CD4-positive, alpha-beta memory T cell (primary cell): ENCODE measurements at regions of chr19 and their contacts with region 1.

Region 1: DNA sequence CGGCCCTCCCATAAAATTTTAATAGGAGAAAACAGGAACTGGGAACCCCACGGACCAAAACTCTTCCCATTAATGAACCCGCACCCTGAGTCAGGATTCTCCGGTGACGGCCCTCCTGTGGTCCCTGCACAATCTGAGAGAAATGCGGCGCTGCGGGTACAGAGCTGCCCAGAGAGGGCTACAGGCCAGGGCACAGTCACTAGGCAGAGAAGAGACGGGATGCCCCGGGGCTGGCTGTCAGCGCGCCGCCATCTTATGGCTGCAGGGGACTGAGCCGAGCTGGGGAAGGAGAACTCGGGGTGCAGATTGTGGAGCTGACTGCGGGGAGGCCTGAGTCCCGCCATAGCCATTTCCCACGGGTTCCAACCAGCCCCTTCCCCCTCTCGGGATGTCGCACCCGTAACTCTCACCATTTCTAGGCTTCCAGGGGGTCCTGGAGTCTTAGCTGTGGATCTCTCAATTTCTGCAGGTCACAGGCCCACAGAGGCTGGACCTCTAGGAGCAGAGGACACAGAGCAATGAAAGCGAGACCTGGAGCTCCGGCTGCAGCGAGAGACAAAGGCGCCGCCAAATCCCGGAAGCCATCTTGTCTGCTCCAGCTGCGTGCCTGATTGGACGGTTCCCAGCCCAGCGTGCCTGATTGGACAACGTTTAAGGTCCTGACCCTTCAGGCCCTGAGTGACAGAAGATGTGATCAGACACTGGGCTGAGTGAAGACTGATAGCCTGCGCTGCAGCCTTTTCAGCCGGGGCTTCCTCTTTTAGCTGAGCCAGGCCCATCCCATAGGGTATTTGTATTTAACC is at the start of gene ZNF675:
- DNase-seq: peak; percentile 87 to 93 (median 88)
- H3K4me3 ChIP-seq: peak within 1 kb of the TSS; percentile 64 to 100
- H3K4me3 Mint-ChIP-seq: peak within 1 kb of the TSS; percentile 99 to 100 (median 99)
- H3K27ac ChIP-seq: peak within 1 kb of the TSS; percentile 83
- H3K27ac Mint-ChIP-seq: peak within 1 kb of the TSS; percentile 96 to 99 (median 98)
- H3K4me1 ChIP-seq: peaks cover 32% of the 10 kb centered on the region
- H3K4me1 Mint-ChIP-seq: peaks cover 35 to 60% (median 48%) of the 10 kb centered on the region in 4 donors
- H3K27me3 ChIP-seq: no peaks in the 10 kb centered on the region
- H3K27me3 Mint-ChIP-seq: no peaks in the 10 kb centered on the region
- total RNA-seq, gene ZNF675: 34.3 to 36.9 TPM

Region 2: DNA sequence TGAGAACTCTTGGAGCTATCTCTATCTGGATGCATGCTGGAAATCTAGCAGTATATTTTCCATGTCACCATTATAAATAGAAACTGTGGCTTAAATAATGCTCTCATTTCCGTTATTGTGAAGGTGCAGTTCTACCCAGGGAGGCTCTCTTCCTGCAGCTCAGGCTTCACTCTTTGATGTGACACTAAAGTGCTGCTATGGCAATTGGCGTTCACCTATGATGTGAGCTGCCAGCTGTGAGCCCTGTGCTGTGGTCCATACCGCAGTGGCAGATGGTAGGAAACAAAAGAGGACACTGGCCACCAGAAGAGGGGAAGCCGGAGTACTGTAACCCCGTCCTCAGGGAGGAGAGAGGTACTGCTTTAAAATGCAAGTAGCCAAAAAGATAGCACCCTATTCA is 112.5 kb after region 1 on chr19:
- CTCF ChIA-PET with region 1: interaction called, 4 read pairs
- POLR2A ChIA-PET with region 1: interaction called, 10 read pairs
- intact Hi-C with region 1: loop called (anchors 5 kb)
- DNase-seq: peak; percentile 59 to 73 (median 65)
- H3K4me3 ChIP-seq: peak overlapping the region in 1 of 2 donors; percentile 45
- H3K4me3 Mint-ChIP-seq: peak overlapping the region; percentile 82 to 94 (median 88)
- H3K27ac ChIP-seq: peak overlapping the region; percentile 51
- H3K27ac Mint-ChIP-seq: peak overlapping the region; percentile 93 to 98 (median 96)
- H3K4me1 ChIP-seq: peaks cover 46% of the 10 kb centered on the region
- H3K4me1 Mint-ChIP-seq: peaks cover 26 to 52% (median 34%) of the 10 kb centered on the region in 4 donors
- H3K27me3 ChIP-seq: no peaks in the 10 kb centered on the region
- H3K27me3 Mint-ChIP-seq: no peaks in the 10 kb centered on the region

Region 3: DNA sequence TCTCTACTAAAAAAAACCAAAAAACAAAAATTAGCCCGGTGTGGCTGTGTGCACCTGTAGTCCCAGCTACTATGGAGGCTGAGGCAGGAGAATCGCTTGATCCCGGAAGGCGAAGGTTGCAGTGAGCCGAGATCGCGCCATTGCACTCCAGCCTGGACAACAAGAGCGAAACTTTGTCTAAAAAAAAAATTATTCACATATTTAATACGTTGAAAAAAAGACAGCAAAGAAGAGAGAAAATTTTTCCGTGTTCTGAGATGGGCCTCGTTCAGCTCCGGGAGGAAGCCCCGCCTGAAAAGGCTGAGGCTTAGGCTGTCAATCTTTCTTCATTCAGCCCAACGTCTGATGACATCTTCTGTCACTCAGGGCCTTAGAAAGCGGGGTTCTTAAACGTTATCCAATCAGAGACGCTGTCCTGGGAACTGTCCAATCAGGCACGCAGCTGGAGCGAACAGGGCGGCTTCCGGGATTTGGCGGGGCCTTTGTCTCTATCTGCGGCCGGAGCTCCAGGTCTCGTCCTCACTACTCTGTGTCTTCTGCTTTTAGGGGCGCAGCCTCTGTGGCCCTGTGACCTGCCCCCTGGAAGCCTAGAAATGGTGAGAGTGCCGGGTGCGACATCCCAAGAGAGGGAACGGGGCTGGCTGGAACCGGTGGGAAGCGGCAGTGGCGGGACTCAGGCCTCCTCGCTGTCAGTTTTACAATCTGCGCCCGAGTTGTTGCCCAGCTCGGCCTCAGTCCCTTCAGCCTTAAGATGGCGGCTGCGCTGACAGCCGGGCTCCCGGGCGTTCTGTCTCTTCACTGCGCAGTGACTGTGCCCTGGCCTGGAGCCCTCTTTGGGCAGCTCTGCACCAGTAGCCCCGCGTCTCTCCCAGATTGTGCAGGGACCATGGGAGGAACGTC is 227.8 kb after region 1 on chr19 and contains the start of gene ZNF726:
- CTCF ChIA-PET with region 1: no interaction called
- POLR2A ChIA-PET with region 1: interaction called, 3 read pairs
- intact Hi-C with region 1: loop called (anchors 1 kb)
- DNase-seq: peak; percentile 88 to 92 (median 89)
- H3K4me3 ChIP-seq: peak within 1 kb of the TSS; percentile 53 to 59
- H3K4me3 Mint-ChIP-seq: peak within 1 kb of the TSS; percentile 93 to 97 (median 95)
- H3K27ac ChIP-seq: peak within 1 kb of the TSS; percentile 53
- H3K27ac Mint-ChIP-seq: peak within 1 kb of the TSS; percentile 90 to 96 (median 91)
- H3K4me1 ChIP-seq: no peaks in the 10 kb centered on the region
- H3K4me1 Mint-ChIP-seq: peaks cover 6 to 24% (median 15%) of the 10 kb centered on the region in 4 donors
- H3K27me3 ChIP-seq: no peaks in the 10 kb centered on the region
- H3K27me3 Mint-ChIP-seq: no peaks in the 10 kb centered on the region
- total RNA-seq, gene ZNF726: 3.0 to 3.3 TPM

Region 4: GRCh38 chr19:23946569-23946968 is 259.7 kb after region 1 on chr19:
- CTCF ChIA-PET with region 1: no interaction called
- POLR2A ChIA-PET with region 1: no interaction called
- intact Hi-C with region 1: no loop called
- DNase-seq: peak in 1 of 5 donors; percentile 9
- H3K4me3 ChIP-seq: no peak overlapping the region
- H3K4me3 Mint-ChIP-seq: peak overlapping the region in 6 of 8 donors; percentile 25 to 64 (median 38)
- H3K27ac ChIP-seq: no peak overlapping the region
- H3K27ac Mint-ChIP-seq: peak overlapping the region in 6 of 7 donors; percentile 9 to 68 (median 25)
- H3K4me1 ChIP-seq: no peaks in the 10 kb centered on the region
- H3K4me1 Mint-ChIP-seq: peaks cover 7 to 19% (median 13%) of the 10 kb centered on the region in 4 donors
- H3K27me3 ChIP-seq: no peaks in the 10 kb centered on the region
- H3K27me3 Mint-ChIP-seq: no peaks in the 10 kb centered on the region